ENCODE measurements at regions of chr22 and their contacts with region 1.

Region 1: DNA sequence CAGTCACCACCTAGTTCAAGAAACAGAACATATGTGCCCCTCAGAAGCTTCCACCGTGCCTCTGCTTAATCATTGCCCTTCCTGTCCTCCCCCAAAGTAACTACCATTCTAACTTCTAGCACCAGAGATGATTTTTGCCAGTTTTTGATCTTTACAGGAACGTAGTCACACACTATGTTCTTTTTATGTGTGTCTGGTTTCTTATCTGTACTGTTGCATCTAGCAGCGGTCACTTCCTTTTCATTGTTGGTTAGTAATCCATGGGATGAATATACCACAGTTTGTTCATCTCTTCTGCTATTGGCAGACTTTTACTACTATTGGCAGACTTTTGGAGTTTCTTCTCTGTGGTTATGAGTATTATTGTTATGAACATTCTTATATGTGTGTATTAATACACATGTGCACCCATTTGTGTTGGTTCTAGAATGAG is 34.6 kb downstream of the SPECC1L start:
- DNase-seq: no peak
- H3K4me3 ChIP-seq: no peak overlapping the region
- H3K27ac ChIP-seq: peak overlapping the region; percentile 85
- H3K4me1 ChIP-seq: peaks cover 54% of the 10 kb centered on the region
- H3K27me3 ChIP-seq: no peaks in the 10 kb centered on the region
- CTCF ChIP-seq: no peak

Region 2: DNA sequence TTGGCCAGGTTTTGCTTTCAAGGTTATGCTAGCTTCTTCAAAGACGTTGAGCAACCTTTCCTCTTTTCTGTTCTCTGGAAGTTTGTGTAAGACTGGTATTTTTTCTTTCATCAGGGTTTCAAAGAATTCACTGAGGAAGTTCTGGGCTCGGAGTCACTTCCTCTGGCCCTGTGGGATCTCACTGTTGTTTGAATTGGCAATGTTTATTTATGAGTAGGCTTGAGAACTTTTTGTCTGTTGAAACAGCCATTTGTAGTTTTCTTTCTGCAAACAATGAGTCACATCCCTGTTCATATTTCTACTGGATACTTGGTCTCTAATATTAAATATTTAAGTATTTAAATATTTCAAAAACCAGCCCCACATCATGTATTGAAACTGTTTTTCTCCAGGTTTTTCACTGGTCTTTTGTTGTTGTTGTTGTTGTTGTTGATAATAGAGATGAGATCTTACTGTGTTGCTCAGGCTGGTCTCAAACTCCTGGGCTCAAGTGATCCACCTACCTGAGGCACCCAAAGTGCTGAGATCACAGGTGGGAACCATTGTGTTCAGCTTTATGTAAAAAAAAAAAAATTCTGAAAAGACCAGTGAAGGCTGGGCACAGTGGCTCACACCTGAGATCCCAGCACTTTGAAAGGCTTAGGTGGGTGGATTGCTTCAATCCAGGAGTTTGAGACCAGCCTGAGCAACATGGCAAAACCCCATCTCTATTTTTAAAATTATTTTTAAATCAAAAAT is 97.1 kb before region 1 on chr22:
- CTCF ChIA-PET with region 1: no interaction called
- POLR2A ChIA-PET with region 1: no interaction called
- intact Hi-C with region 1: loop called (anchors 10 kb)
- DNase-seq: peak; percentile 55 to 100
- H3K4me3 ChIP-seq: no peak overlapping the region; the same call in 1 of the 2 replicates
- H3K27ac ChIP-seq: peak overlapping the region; percentile 99
- H3K4me1 ChIP-seq: peaks cover 65% of the 10 kb centered on the region
- H3K27me3 ChIP-seq: no peaks in the 10 kb centered on the region
- CTCF ChIP-seq: no peak

Region 3: GRCh38 chr22:24236656-24237055 is 68.6 kb before region 1 on chr22:
- CTCF ChIA-PET with region 1: no interaction called
- POLR2A ChIA-PET with region 1: no interaction called
- intact Hi-C with region 1: no loop called
- DNase-seq: no peak
- H3K4me3 ChIP-seq: no peak overlapping the region
- H3K27ac ChIP-seq: no peak overlapping the region
- H3K4me1 ChIP-seq: no peaks in the 10 kb centered on the region; the same call in 1 of the 2 replicates
- H3K27me3 ChIP-seq: no peaks in the 10 kb centered on the region
- CTCF ChIP-seq: no peak

Region 4: DNA sequence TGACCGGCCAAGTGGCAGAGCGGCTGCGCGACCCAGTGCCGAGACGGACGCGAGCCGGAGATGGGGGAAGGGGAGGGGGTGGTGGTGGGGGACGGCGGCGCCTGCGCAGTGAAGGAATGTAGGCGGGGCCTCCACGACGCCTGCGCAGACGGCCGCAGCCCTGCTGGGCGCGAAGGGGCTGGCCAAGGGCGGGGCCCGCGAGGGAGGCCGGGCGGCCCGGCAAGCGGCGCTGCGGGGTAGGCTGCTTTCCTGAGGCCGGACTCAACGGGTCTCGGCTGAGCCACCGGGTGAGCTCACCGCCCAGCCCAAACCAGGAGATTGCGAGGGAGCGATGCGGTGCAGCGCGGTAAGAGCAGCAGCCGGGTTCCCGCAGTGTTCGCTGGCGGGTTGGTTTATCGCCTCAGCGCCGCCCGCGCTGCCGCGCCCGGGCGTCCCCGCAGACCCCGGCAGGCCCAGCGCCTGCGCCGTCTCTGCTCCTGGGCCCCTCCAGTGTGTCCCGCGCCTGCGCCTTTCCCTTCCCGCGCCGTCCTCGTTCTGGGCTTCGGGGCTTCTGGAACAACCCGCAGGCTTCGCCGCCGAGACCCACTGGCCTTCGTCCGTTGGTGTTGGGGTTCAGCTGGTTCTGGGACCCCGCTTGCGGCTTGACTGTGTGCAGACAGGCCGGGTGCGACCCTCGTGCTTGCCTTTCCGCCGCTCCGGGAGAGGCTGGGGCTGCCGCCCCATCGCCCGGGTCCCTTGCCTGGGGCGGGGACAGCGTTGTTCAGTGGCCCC is 34.5 kb before region 1 on chr22 and contains the start of gene SPECC1L:
- CTCF ChIA-PET with region 1: no interaction called
- POLR2A ChIA-PET with region 1: no interaction called
- intact Hi-C with region 1: loop called (anchors 1 kb)
- DNase-seq: peak; percentile 78 to 89
- H3K4me3 ChIP-seq: peak within 1 kb of the TSS; percentile 90
- H3K27ac ChIP-seq: peak within 1 kb of the TSS; percentile 79
- H3K4me1 ChIP-seq: peaks cover 28% of the 10 kb centered on the region
- H3K27me3 ChIP-seq: no peaks in the 10 kb centered on the region
- CTCF ChIP-seq: no peak
- total RNA-seq, gene SPECC1L: 37.6 and 38.9 TPM in 2 replicates

Region 5: GRCh38 chr22:24289114-24289513 is 16.2 kb before region 1 on chr22:
- CTCF ChIA-PET with region 1: interaction called, 5 read pairs
- POLR2A ChIA-PET with region 1: no interaction called
- intact Hi-C with region 1: loop called (anchors 2 kb)
- DNase-seq: no peak
- H3K4me3 ChIP-seq: no peak overlapping the region
- H3K27ac ChIP-seq: peak overlapping the region; percentile 12; the same call in 1 of the 2 replicates
- H3K4me1 ChIP-seq: peaks cover 27% of the 10 kb centered on the region
- H3K27me3 ChIP-seq: no peaks in the 10 kb centered on the region
- CTCF ChIP-seq: no peak

Region 6: GRCh38 chr22:24391836-24392217 is 86.6 kb after region 1 on chr22:
- CTCF ChIA-PET with region 1: no interaction called
- POLR2A ChIA-PET with region 1: no interaction called
- intact Hi-C with region 1: no loop called
- DNase-seq: peak in 1 of 2 experiments; percentile 76
- H3K4me3 ChIP-seq: no peak overlapping the region
- H3K27ac ChIP-seq: peak overlapping the region; percentile 6; the same call in 1 of the 2 replicates
- H3K4me1 ChIP-seq: no peaks in the 10 kb centered on the region
- H3K27me3 ChIP-seq: no peaks in the 10 kb centered on the region
- CTCF ChIP-seq: no peak

Measured in PC-9 (cell line).